Activated B cell treated with CpG ODN at 0.5 μM for 24 hours (primary cell): ENCODE measurements at regions of chr3 and their contacts with region 1.

Region 1: DNA sequence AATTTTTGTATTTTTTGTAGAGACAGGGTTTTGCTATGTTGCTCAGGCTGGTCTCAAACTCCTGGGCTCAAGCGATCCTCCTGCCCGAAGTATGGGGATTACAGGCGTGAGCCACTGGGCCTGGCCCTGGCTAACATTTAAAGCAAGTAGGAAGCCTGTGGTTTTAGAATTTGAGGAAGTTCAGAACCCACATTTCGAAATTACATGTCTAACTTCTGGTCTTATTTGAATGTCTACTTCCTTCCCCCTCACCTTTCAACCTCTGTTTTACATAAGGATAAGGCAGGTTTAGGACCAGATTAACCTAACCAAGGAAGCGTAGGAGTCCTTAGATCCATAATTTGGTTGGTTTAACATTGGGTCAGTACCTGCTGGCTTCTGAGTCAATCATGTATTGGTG is 120.5 kb upstream of the PROK2 start:
- DNase-seq: no peak
- ATAC-seq: peak; percentile 90
- H3K4me3 Mint-ChIP-seq: peak overlapping the region; percentile 52
- H3K27ac Mint-ChIP-seq: no peak overlapping the region
- H3K4me1 Mint-ChIP-seq: peaks cover 42% of the 10 kb centered on the region
- H3K27me3 Mint-ChIP-seq: peaks cover 73% of the 10 kb centered on the region
- CTCF ChIP-seq: no peak

Region 2: GRCh38 chr3:71893122-71893521 is 12.3 kb before region 1 on chr3:
- CTCF ChIA-PET with region 1: no interaction called
- POLR2A ChIA-PET with region 1: no interaction called
- intact Hi-C with region 1: loop called (anchors 2 kb)
- DNase-seq: no peak
- ATAC-seq: no peak
- H3K4me3 Mint-ChIP-seq: no peak overlapping the region
- H3K27ac Mint-ChIP-seq: no peak overlapping the region
- H3K4me1 Mint-ChIP-seq: peaks cover 4% of the 10 kb centered on the region
- H3K27me3 Mint-ChIP-seq: peaks cover 59% of the 10 kb centered on the region
- CTCF ChIP-seq: no peak

Region 3: DNA sequence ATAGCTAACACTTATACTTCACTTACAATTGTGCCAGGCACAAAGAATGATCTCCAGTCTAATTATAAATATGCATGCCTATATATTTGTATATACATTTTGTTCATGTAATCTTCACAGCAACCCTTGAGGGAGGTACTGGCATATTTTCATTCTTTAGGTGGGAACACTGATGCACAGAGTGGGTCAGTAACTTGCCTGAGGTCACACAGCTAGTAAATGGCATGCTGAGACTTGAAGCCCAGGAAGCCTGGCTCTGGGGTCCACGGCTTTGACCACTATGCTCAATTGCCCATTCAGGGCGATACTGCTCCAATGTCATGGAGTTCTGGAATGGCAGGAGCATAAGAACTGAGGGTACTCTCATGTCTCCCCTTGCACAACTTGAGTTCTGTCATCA is 803.0 kb after region 1 on chr3:
- CTCF ChIA-PET with region 1: no interaction called
- POLR2A ChIA-PET with region 1: no interaction called
- intact Hi-C with region 1: no loop called
- DNase-seq: no peak
- ATAC-seq: no peak
- H3K4me3 Mint-ChIP-seq: no peak overlapping the region
- H3K27ac Mint-ChIP-seq: no peak overlapping the region
- H3K4me1 Mint-ChIP-seq: no peaks in the 10 kb centered on the region
- H3K27me3 Mint-ChIP-seq: peaks cover 3% of the 10 kb centered on the region
- CTCF ChIP-seq: no peak